ENCODE measurements at regions of chr1 and their contacts with region 1.

Region 1: DNA sequence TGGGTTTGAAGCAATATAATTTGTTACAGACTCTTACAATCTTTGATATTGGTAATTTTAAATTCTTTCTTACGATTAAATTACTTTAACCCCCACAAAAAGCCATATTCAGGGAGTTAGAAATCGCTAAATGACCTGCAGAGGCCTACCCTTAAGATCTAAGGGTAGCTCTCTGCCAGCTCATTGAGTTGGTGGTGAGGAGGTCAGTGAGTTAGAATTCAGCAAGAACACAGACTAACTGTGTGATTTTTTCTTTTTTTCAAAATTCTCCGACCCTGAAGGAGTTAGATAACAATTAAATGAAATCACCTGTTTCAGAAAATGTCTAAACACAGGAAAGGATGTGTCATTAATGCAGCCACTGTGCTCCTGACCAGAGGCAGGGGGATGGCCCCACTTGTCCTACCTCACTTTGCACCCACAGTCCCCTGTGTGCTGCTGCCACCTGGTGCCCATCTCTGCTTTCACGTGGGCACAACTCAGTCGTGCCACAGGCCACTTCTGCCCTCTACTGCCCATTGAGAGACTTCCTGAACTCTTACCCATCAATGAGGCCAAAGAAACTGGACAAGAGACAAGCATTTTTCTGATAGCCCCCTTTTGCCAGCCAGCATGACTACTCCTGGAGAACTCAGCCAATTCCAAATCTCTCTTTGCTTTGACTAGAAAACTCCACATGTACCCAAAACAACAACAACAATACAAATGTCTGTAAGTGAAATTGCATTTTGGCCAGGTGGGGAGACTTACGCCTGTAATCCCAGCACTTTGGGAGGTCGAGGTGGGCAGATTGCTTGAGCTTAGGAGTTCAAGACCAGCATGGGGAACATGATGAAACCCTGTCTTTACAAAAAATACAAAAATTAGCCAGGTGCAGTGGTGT is 8.4 kb downstream of the CFAP45 start:
- DNase-seq: peak; percentile 82 to 90
- ATAC-seq: peak; percentile 95 to 99
- H3K4me3 ChIP-seq: no peak overlapping the region
- H3K27ac ChIP-seq: peak overlapping the region in 1 of 2 experiments; percentile 54; a peak in 1 of 6 replicates
- H3K4me1 ChIP-seq: peaks cover 11% of the 10 kb centered on the region; the same call in 2 of the 3 replicates
- CTCF ChIP-seq: peak; percentile 100
- EP300 ChIP-seq: no peak
- POLR2A ChIP-seq: no peak
- RAD21 ChIP-seq: peak; percentile 100

Region 2: DNA sequence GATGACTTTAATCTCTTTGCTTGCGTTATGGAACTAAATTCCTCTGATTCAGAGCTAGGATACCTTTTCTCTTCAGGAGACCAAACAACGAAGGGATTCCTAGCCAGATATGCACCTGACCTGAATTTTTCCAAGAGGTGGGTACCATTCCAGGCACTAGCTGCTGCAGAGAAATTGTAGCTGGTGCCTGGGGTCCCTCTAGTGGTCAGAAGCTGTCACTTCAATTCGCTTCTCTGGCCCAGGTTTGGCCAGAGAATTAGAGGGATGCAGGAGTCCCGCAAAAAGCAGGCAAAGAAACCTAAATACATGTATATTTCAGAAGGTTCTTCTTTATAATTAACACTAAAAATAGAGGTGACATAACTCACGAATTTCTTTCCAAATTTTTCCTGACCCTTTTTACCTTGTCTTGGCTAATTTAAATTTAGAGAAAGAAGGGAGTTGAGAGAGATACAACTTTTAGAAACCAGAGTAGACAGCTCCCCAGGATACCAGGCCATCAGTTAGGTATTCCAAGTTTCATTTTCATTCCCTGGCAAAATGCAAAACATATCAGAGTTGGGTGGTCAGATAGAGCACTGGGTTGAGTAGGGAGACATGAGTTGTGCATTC is 677.3 kb before region 1 on chr1:
- CTCF ChIA-PET with region 1: interaction called, 24 read pairs
- POLR2A ChIA-PET with region 1: no interaction called
- DNase-seq: peak; percentile 40 to 59
- ATAC-seq: peak; percentile 67 to 90; a peak in 5 of 6 replicates
- H3K4me3 ChIP-seq: no peak overlapping the region
- H3K27ac ChIP-seq: no peak overlapping the region
- H3K4me1 ChIP-seq: peaks cover 13% of the 10 kb centered on the region; the same call in 1 of the 3 replicates
- CTCF ChIP-seq: peak; percentile 77
- EP300 ChIP-seq: no peak
- POLR2A ChIP-seq: no peak
- RAD21 ChIP-seq: peak; percentile 67 to 71

Region 3: DNA sequence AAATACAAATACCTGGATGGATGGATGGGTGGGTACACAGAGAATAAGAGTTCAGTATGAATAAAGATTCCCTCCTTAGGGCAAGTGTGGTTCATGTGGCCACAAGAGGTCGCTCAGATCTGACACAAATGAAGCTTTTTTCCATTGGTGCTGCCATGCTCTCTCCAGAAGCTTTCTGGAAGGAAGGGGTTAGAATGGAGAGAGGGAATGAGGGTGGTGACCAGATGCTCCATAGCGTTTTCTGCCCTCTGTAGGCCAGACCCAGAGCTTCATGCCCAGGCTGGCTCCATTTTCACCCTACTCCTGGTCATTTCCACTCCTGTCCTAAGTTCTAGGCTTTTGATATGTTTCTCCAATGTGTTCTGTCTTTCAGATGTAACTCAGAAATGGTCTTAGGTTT is 92.6 kb before region 1 on chr1:
- CTCF ChIA-PET with region 1: interaction called, 565 read pairs
- POLR2A ChIA-PET with region 1: interaction called, 12 read pairs
- DNase-seq: peak; percentile 86 to 91
- ATAC-seq: peak; percentile 91 to 99
- H3K4me3 ChIP-seq: no peak overlapping the region
- H3K27ac ChIP-seq: no peak overlapping the region
- H3K4me1 ChIP-seq: no peaks in the 10 kb centered on the region
- CTCF ChIP-seq: peak; percentile 88
- EP300 ChIP-seq: no peak
- POLR2A ChIP-seq: no peak
- RAD21 ChIP-seq: peak; percentile 87

Region 4: DNA sequence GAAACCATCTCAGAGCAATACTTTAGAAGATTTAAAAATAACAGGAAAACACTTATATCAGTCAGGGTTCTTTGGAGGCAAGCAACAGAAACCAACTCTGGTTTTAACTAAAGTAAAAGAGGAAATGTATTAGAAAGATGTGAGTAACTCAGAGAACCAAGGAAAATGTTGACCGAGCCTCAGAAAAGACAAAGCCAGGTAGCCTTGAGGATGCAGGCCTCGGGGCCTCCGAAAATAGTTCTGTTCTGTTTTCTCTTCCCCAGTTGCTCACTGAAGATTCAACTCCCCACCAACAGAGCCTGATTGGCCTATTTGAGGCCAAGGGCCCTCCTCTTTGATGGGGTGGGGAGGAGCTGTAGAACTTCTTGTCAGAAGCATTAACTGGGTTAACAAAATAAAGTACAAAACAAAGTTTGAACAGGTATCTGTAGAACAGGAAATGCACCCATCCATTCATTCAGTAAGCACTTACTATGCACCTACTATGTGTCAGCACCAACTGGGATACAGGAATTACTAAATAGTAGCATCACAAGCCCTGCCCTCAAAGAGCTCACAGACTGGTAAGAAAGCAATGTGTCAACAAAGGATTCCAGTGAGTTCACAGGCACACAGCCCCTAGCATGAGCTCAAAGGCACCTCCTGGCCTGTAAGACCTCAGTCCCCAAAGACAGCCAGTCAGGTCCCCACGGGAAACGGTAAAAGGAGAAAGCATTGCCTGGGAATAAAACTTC is 52.2 kb before region 1 on chr1:
- CTCF ChIA-PET with region 1: interaction called, 53 read pairs
- POLR2A ChIA-PET with region 1: no interaction called
- DNase-seq: no peak
- ATAC-seq: no peak
- H3K4me3 ChIP-seq: no peak overlapping the region
- H3K27ac ChIP-seq: no peak overlapping the region
- H3K4me1 ChIP-seq: no peaks in the 10 kb centered on the region
- CTCF ChIP-seq: no peak
- EP300 ChIP-seq: no peak
- POLR2A ChIP-seq: no peak
- RAD21 ChIP-seq: no peak

Region 5: DNA sequence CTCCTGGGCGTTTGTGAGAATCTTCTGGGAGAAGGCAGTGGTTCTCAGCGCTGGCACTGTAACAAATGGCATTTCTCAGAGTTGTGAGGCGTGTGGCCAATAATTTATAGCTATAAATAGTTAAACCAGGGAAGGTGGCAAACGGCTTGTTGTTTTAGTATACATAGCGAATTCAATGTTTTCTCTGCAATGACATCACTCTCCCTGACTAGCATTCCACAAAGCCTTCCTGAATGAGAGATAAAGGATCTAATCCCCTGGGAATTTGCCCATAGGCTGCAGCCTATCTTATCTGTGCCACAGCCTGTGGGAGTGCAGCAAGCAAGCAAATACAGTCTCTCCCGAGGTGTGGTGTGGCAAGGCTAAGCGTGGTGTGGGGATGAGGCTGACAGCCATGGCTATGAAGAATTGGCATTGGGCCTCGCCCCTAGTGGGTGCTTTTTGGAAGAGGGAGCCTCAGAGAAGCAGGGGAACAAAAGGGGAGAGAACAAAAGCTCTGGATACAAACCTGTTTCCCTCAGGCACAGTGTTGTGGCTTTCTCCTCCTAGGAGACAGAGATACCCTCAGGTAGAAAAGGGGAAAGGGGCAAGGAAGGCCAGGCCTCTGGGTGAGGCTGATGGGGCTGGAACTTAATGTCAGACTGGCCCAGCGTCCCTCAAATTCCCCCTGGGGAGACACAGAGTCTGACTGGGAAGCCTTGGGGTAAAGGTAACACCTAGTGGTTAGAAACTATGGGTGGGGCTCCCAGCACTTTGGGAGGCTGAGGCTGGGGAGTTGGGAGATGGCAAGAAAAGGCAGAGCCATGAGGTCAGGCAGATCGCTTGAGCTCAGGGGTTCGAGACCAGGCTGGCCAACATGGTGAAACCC is 24.9 kb after region 1 on chr1:
- CTCF ChIA-PET with region 1: interaction called, 67 read pairs
- POLR2A ChIA-PET with region 1: no interaction called
- DNase-seq: peak; percentile 94 to 95
- ATAC-seq: peak; percentile 75 to 86
- H3K4me3 ChIP-seq: no peak overlapping the region
- H3K27ac ChIP-seq: peak overlapping the region; percentile 76 to 87
- H3K4me1 ChIP-seq: peaks cover 92% of the 10 kb centered on the region
- CTCF ChIP-seq: no peak
- EP300 ChIP-seq: peak; percentile 78 to 84; a peak in 3 of 5 replicates
- POLR2A ChIP-seq: no peak
- RAD21 ChIP-seq: peak in 1 of 2 experiments; percentile 7; a peak in 1 of 5 replicates

Region 6: GRCh38 chr1:159945483-159946241 is 54.1 kb after region 1 on chr1 and contains the start of gene IGSF9:
- CTCF ChIA-PET with region 1: interaction called, 30 read pairs
- POLR2A ChIA-PET with region 1: no interaction called
- DNase-seq: peak; percentile 61 to 71
- ATAC-seq: peak; percentile 82 to 95
- H3K4me3 ChIP-seq: peak within 1 kb of the TSS; percentile 41
- H3K27ac ChIP-seq: peak within 1 kb of the TSS; percentile 40 to 83; a peak in 5 of 6 replicates
- H3K4me1 ChIP-seq: peaks cover 5% of the 10 kb centered on the region; the same call in 1 of the 3 replicates
- CTCF ChIP-seq: peak; percentile 60
- EP300 ChIP-seq: no peak
- POLR2A ChIP-seq: no peak
- RAD21 ChIP-seq: peak; percentile 56 to 70
- polyA plus RNA-seq, gene IGSF9: 0.05 and 0.06 TPM in 2 replicates

Measured in A549 (cell line).